ENCODE measurements at regions of chr9 and their contacts with region 1.

Region 1: GRCh38 chr9:17810728-17811571 is 232.1 kb downstream of the SH3GL2 start:
- H3K4me3 ChIP-seq: no peak overlapping the region
- H3K27ac ChIP-seq: no peak overlapping the region
- H3K4me1 ChIP-seq: no peaks in the 10 kb centered on the region
- CTCF ChIP-seq: peak; percentile 44; the same call in 1 of the 2 replicates

Region 2: DNA sequence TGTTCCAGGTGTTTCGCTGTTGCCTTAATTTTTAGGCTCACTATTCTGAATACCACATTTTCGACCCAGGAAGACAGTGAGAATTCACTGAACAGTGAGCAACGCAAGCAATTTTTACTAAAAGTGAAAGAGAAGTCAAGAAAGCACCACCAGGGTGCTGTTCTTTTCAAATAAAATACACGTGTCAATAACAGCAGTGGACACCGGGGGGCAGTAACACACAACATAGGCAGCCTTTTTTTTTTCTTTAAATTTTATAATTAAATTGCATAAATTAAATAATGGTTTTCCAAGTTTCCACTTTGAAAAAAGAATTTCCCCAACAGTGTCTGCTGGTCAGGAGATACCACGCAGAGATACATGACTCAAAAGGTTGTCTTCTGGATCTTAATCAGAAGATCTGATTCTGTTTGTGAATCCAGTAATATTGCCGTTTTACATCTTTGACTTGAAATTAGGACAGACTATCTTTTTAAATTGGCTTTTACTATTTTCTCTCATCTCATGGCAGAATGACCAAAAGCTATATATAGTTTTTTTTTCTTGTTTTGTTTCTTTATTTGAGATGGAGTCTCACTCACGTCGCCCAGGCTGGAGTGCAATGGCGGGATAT is 279.2 kb before region 1 on chr9:
- CTCF ChIA-PET with region 1: interaction called, 26 read pairs
- POLR2A ChIA-PET with region 1: no interaction called
- H3K4me3 ChIP-seq: no peak overlapping the region
- H3K27ac ChIP-seq: no peak overlapping the region
- H3K4me1 ChIP-seq: no peaks in the 10 kb centered on the region
- CTCF ChIP-seq: peak; percentile 42; the same call in 1 of the 2 replicates

Region 3: GRCh38 chr9:17660158-17660557 is 150.8 kb before region 1 on chr9:
- CTCF ChIA-PET with region 1: no interaction called
- POLR2A ChIA-PET with region 1: no interaction called
- H3K4me3 ChIP-seq: no peak overlapping the region
- H3K27ac ChIP-seq: no peak overlapping the region
- H3K4me1 ChIP-seq: no peaks in the 10 kb centered on the region
- CTCF ChIP-seq: no peak

Region 4: GRCh38 chr9:18143028-18143745 is 332.2 kb after region 1 on chr9:
- CTCF ChIA-PET with region 1: interaction called, 30 read pairs
- POLR2A ChIA-PET with region 1: no interaction called
- H3K4me3 ChIP-seq: no peak overlapping the region
- H3K27ac ChIP-seq: no peak overlapping the region
- H3K4me1 ChIP-seq: no peaks in the 10 kb centered on the region
- CTCF ChIP-seq: no peak

Region 5: DNA sequence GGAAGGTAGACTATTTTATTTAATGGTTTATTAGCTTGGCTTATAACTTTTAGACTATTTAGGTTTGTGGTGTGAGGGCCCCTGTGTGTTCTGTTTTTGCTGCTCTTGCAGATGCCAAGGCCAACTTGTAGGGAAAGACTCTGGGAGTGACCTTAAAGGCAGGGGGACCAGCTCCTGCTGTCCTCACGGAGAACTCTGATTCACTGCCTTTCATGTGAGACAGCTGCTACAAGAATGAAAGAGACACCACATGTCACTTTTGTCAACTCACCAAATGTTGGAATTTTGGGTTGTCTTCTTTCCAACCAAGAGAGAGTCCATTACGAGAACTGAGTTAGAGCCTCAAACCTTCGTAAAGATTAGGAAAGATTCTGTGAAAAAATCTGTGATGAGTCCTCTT is 404.7 kb after region 1 on chr9:
- CTCF ChIA-PET with region 1: interaction called, 149 read pairs
- POLR2A ChIA-PET with region 1: interaction called, 3 read pairs
- H3K4me3 ChIP-seq: no peak overlapping the region
- H3K27ac ChIP-seq: no peak overlapping the region
- H3K4me1 ChIP-seq: no peaks in the 10 kb centered on the region
- CTCF ChIP-seq: no peak

Region 6: GRCh38 chr9:19028835-19029451 is 1218.0 kb after region 1 on chr9:
- CTCF ChIA-PET with region 1: interaction called, 22 read pairs
- POLR2A ChIA-PET with region 1: no interaction called
- H3K4me3 ChIP-seq: no peak overlapping the region
- H3K27ac ChIP-seq: no peak overlapping the region
- H3K4me1 ChIP-seq: no peaks in the 10 kb centered on the region
- CTCF ChIP-seq: no peak

Measured in HEK293 (cell line).